Endothelial cell of umbilical vein (primary cell): ENCODE measurements at regions of chr20 and their contacts with region 1.

Region 1: DNA sequence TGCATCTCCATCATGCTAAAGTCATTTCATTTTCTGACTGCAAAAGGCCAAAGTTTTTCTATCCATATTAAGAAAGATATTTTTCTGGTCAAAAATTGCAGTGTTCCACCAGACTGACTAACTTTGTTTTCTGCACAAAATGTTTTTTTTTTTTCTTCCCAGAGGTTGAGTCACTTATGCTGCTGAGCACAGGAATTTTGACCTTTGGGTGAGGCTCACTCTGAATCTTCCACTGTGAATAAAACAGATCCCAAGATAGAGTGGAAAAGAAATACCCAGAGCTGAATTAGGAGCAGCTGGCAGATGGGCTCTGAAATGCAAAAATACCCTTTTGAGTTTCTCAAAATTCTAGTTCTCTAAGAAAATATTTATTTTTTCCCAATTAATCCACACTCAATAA is 996.8 kb downstream of the KIF16B start:
- DNase-seq: no peak
- H3K4me3 ChIP-seq: no peak overlapping the region
- H3K27ac ChIP-seq: no peak overlapping the region
- H3K4me1 ChIP-seq: no peaks in the 10 kb centered on the region
- H3K27me3 ChIP-seq: no peaks in the 10 kb centered on the region
- CTCF ChIP-seq: no peak
- POLR2A ChIP-seq: no peak

Region 2: DNA sequence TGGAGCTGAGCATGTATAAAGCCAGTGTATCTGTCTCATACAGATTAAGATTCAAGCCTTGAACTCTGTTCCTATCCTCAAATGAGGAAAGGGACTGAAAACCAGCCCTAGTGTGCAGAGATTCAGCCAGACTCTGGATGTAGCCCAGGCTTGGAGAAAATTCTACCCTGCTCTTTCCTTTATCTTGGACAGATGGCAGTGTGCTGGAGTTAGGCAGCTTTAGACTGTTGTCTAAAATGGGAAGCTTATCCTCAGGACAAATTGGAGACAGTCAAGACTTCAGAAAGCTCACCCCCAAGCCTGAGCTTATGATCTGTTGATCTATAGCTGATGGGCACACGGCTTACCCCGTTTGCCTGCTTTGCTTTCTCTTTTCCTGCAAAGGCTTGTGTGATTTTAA is 60.7 kb before region 1 on chr20:
- CTCF ChIA-PET with region 1: no interaction called
- POLR2A ChIA-PET with region 1: no interaction called
- dilution Hi-C with region 1: no loop called
- intact Hi-C with region 1: loop called (anchors 10 kb)
- DNase-seq: no peak
- H3K4me3 ChIP-seq: no peak overlapping the region
- H3K27ac ChIP-seq: no peak overlapping the region
- H3K4me1 ChIP-seq: no peaks in the 10 kb centered on the region
- H3K27me3 ChIP-seq: no peaks in the 10 kb centered on the region
- CTCF ChIP-seq: no peak
- POLR2A ChIP-seq: no peak